ENCODE measurements at regions of chr3 and their contacts with region 1.

Region 1: GRCh38 chr3:13324835-13325501 is 95.2 kb downstream of the NUP210 start:
- DNase-seq: no peak
- H3K4me3 ChIP-seq: no peak overlapping the region
- H3K27ac ChIP-seq: no peak overlapping the region
- H3K4me1 ChIP-seq: no peaks in the 10 kb centered on the region
- H3K27me3 ChIP-seq: no peaks in the 10 kb centered on the region
- CTCF ChIP-seq: no peak

Region 2: DNA sequence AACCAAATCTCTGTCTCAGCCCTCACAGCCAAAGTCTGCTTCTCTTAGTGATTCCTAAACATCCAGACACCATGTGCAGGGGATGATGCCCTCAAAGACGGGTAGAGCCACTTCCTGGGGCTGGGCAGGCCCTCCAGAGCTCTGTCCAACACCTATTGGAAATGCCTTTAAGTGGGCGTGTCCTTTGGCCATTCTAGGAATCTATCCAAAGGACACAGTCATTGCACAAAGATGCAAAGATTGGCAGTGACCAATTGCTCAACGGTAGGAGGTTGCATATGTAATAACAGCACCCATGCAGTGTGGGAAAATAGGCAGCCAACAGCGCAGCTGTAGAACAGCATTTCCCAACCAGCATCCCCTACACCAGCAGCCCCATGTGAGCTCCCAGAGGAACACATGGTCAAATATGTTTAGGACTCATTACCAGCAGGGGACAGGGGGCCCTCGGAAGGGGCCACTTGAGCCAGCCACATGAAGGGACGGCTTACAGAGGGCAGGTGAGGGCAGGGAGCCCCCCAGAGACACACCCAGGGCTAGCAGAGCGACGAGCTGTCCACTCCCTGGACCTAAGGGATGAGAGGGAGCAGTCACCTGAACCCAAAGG is 108.9 kb before region 1 on chr3:
- intact Hi-C with region 1: loop called (anchors 10 kb)
- DNase-seq: no peak
- H3K4me3 ChIP-seq: no peak overlapping the region
- H3K27ac ChIP-seq: no peak overlapping the region
- H3K4me1 ChIP-seq: no peaks in the 10 kb centered on the region
- H3K27me3 ChIP-seq: no peaks in the 10 kb centered on the region
- CTCF ChIP-seq: no peak

Region 3: GRCh38 chr3:14837878-14838258 is 1512.9 kb after region 1 on chr3:
- intact Hi-C with region 1: no loop called
- DNase-seq: no peak
- H3K4me3 ChIP-seq: no peak overlapping the region
- H3K27ac ChIP-seq: no peak overlapping the region
- H3K4me1 ChIP-seq: no peaks in the 10 kb centered on the region
- H3K27me3 ChIP-seq: no peaks in the 10 kb centered on the region
- CTCF ChIP-seq: no peak

Measured in ascending aorta (tissue), 2 donors.